Colonic mucosa (tissue), 4 donors: ENCODE measurements at regions of chr12 and their contacts with region 1.

Region 1: DNA sequence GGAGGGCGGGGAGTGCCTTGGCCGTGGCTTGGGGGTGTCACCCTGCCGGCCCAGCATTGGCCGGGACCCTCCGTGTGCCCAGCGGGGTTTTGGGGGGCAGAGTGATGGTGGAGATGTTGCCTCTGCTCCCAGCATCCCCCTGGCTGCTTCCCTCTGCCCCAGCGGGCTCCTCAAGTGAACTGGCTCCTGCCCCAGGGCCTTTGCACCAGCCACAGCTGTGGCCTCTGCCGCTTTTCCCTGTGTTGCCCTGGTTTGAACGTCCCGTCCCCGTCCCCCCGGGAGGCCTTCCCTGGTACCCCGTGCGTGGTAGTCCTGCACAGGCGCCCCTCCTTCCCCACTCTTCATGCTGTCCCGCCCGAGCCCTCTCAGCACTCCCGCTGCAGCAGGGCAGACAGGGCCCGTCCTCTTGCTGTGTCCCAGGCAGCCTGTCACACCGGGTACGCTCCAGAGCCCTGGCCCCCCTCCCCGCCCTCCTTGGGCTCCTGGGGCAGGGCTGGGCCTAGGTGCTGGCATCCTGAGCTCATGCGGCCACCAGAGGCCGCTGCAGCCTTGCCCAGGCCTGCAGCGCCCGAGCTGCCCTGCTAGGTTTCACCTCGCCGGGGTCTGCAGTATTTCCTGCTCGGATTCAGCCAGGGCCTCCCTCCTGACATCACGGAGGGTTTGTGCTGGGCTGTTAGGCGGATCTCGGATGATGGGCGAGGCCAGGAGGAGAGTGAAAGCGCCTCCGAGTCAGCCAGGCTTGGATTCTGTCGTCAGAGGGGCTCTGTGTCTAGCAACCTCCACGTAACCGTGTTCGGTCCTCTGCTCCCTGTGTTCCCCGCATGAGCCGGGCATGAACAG is 9.5 kb downstream of the NOC4L start:
- DNase-seq: peak; percentile 50
- H3K4me3 ChIP-seq: no peak overlapping the region
- H3K27ac ChIP-seq: no peak overlapping the region
- H3K4me1 ChIP-seq: no peaks in the 10 kb centered on the region
- H3K27me3 ChIP-seq: no peaks in the 10 kb centered on the region
- CTCF ChIP-seq: peak; percentile 92

Region 2: DNA sequence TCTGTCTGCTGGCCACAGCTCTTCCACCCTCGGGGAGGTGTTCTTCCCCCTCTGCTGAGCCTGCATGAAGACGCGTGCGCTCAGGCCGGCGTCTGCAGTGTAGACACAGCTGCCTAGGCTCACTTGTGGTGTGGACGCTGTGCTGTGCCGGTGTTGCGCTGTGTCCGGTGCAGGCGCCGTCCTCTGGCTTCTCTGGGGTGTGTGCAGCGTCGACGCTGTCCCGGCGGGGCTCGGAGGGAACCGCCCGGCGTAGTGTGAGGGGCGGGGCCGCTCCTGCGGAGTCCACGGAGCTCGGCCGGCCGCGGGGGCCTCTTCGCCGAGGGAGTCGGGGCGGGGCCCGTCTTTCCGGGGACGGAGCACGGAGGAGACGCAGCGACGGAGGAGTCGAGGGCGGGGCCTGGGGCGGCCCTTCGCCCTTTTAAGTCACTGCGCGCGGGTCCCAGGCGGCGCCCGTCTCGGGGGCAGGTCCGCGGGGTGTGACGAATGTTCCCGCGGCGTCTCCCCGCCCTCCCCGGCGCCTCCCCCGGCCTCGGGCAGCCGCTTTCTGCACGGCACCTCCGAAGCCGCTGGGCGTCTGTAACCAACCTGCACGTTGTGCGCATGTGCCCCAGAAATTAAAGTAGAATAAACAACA is 35.8 kb after region 1 on chr12:
- intact Hi-C with region 1: no loop called
- DNase-seq: peak; percentile 93
- H3K4me3 ChIP-seq: peak overlapping the region; percentile 46
- H3K27ac ChIP-seq: peak overlapping the region; percentile 66
- H3K4me1 ChIP-seq: peaks cover 6% of the 10 kb centered on the region
- H3K27me3 ChIP-seq: no peaks in the 10 kb centered on the region
- CTCF ChIP-seq: no peak

Region 3: GRCh38 chr12:132218915-132219314 is 65.2 kb after region 1 on chr12:
- intact Hi-C with region 1: loop called (anchors 2 kb)
- DNase-seq: no peak
- H3K4me3 ChIP-seq: no peak overlapping the region
- H3K27ac ChIP-seq: no peak overlapping the region
- H3K4me1 ChIP-seq: no peaks in the 10 kb centered on the region
- H3K27me3 ChIP-seq: no peaks in the 10 kb centered on the region
- CTCF ChIP-seq: peak; percentile 23

Region 4: DNA sequence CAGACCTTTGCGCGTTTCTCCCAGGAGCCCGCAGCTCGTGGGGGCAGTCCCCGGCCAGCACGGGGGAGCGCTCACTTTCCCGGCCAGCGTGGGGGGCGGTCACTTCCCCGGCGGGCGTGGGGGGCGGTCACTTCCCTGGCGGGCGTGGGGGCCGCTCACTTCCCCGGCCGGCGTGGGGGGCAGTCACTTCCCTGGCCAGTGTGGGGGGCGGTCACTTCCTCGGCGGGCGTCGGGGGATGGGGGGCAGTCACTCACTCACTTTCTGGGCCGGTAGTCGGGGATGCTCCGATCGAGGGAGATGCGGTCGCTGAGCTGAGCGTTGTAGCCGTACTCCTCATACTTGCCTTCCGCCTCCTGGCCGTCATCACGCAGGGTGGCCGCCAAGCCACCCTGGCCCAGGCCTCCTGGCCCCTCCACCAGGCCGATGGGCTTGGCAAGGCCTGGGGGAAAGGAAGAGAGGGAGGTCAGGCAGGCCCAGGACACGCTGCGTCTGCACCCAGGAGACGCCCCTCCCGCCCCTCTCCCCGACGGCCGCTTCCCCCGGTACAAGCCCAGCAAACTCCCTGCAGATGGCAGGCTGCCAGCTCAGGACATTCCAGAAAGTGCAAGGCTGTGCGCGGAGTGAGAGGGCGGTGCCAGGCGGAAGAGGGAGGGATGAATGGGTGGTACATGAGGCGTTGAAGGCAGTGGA is 132.4 kb after region 1 on chr12:
- intact Hi-C with region 1: no loop called
- DNase-seq: peak; percentile 50
- H3K4me3 ChIP-seq: no peak overlapping the region
- H3K27ac ChIP-seq: no peak overlapping the region
- H3K4me1 ChIP-seq: no peaks in the 10 kb centered on the region
- H3K27me3 ChIP-seq: no peaks in the 10 kb centered on the region
- CTCF ChIP-seq: no peak

Region 5: GRCh38 chr12:132379996-132380395 is 226.3 kb after region 1 on chr12:
- intact Hi-C with region 1: no loop called
- DNase-seq: no peak
- H3K4me3 ChIP-seq: no peak overlapping the region
- H3K27ac ChIP-seq: no peak overlapping the region
- H3K4me1 ChIP-seq: no peaks in the 10 kb centered on the region
- H3K27me3 ChIP-seq: no peaks in the 10 kb centered on the region
- CTCF ChIP-seq: no peak

Region 6: GRCh38 chr12:132414634-132415326 is 261.1 kb after region 1 on chr12:
- intact Hi-C with region 1: loop called (anchors 5 kb)
- DNase-seq: peak; percentile 89
- H3K4me3 ChIP-seq: no peak overlapping the region
- H3K27ac ChIP-seq: no peak overlapping the region
- H3K4me1 ChIP-seq: peaks cover 4% of the 10 kb centered on the region
- H3K27me3 ChIP-seq: peaks cover 6% of the 10 kb centered on the region
- CTCF ChIP-seq: peak; percentile 91

Region 7: DNA sequence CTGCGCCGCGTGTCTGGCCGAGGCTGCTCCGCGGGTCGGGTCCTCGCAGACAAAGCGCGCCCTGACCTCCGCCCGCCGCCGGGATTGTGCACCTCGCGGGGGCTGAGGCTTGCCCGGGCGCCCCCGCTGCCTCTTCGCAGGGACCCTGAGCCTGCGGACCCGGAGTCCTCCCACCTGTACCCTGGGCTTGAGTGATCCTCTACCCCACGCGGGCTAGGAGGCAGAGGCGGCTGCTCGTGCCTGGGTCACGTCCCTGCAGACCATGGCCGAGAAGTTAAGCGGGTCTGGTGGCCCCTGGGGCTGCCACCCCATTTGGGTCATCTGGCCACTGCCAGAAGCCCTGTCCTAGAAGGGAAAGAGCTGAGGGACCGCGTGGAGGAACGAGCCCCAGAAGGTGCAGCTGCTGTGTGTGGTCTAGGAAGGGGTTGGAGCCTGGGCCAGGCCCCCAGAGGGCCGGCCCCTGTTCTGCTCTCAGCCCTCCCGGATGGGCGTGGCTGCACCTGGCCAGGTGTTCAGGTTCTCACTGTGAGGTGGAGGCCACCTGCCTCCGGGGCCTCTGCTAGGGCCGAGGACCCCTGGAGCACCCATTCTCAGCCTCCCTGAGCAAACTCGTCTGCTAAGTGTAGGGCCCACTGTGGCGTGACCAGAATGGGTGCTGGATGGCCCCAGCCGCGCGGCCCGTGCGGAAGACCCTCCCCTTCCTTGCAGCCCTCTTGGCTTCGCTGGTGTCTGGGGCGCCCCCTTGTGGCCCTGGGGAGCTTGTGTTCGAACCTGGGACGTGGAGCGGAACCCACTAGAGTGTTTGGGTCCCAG is 407.1 kb after region 1 on chr12:
- intact Hi-C with region 1: no loop called
- DNase-seq: peak; percentile 81
- H3K4me3 ChIP-seq: peak overlapping the region; percentile 74
- H3K27ac ChIP-seq: no peak overlapping the region
- H3K4me1 ChIP-seq: peaks cover 7% of the 10 kb centered on the region
- H3K27me3 ChIP-seq: no peaks in the 10 kb centered on the region
- CTCF ChIP-seq: peak; percentile 56

Region 8: GRCh38 chr12:132614861-132615578 is 461.3 kb after region 1 on chr12:
- intact Hi-C with region 1: loop called (anchors 10 kb)
- DNase-seq: peak; percentile 83
- H3K4me3 ChIP-seq: no peak overlapping the region
- H3K27ac ChIP-seq: no peak overlapping the region
- H3K4me1 ChIP-seq: no peaks in the 10 kb centered on the region
- H3K27me3 ChIP-seq: peaks cover 33% of the 10 kb centered on the region
- CTCF ChIP-seq: peak; percentile 91